Dendritic cell treated with granulocyte-macrophage colony-stimulating factor and Interleukin-4, amounts not matched to agents 40 ng/mL and 50 ng/mL, for 4 days (primary cell): ENCODE measurements at regions of chr10 and their contacts with region 1.

Region 1: GRCh38 chr10:122953827-122954730 is at the start of gene C10orf88:
- H3K4me3 Mint-ChIP-seq: peak within 1 kb of the TSS; percentile 95
- H3K27ac Mint-ChIP-seq: peak within 1 kb of the TSS; percentile 92
- H3K4me1 Mint-ChIP-seq: peaks cover 11% of the 10 kb centered on the region
- H3K27me3 Mint-ChIP-seq: peaks cover 22% of the 10 kb centered on the region

Region 2: GRCh38 chr10:122879339-122880273 is 74.5 kb before region 1 on chr10 and contains the start of gene FAM24B:
- intact Hi-C with region 1: loop called (anchors 5 kb)
- H3K4me3 Mint-ChIP-seq: peak within 1 kb of the TSS; percentile 85
- H3K27ac Mint-ChIP-seq: peak within 1 kb of the TSS; percentile 73
- H3K4me1 Mint-ChIP-seq: peaks cover 28% of the 10 kb centered on the region
- H3K27me3 Mint-ChIP-seq: peaks cover 20% of the 10 kb centered on the region

Region 3: GRCh38 chr10:122980209-122981065 is 26.4 kb after region 1 on chr10 and contains the start of gene PSTK:
- intact Hi-C with region 1: loop called (anchors 1 kb)
- H3K4me3 Mint-ChIP-seq: peak within 1 kb of the TSS; percentile 87
- H3K27ac Mint-ChIP-seq: peak within 1 kb of the TSS; percentile 96
- H3K4me1 Mint-ChIP-seq: peaks cover 6% of the 10 kb centered on the region
- H3K27me3 Mint-ChIP-seq: peaks cover 8% of the 10 kb centered on the region

Region 4: DNA sequence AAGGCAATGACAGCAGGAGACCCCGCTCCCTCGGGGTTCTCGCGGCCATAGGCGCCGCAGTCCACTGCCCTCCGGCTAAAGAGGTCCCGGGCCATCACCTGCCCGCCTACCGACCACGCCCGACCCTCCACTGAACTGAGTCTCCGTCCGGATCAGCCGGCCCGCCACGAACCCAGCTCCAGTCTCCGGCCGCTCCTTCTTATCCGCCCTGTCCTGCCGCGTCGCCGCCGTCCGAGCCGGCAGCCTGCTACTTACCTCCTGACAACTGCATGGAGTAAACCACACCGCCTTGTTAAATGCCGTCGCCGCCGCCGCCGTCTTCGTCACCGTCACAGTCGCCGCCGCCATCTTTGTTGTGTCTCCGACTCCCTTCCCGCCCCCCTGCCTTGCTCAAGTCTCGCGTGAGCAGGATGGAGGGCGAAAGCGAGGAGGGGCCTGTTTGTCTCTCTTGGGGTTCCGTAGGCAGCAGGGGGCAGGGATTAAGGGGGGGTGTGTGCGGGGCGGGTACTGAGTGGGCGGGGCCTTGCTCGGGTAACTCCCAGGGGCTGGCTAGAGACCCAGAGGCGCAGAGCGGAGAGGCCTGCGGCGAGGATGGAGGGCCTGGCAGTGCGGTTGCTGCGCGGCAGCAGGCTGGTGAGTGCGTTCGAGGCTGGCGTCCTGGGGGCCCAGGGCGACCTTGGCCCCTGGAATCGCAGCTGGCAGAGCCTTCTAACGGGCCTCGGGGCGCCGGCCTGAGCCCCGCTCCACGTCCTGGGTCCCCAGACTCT is 54.5 kb after region 1 on chr10 and contains the starts of genes ACADSB and IKZF5:
- intact Hi-C with region 1: loop called (anchors 1 kb)
- H3K4me3 Mint-ChIP-seq: peak within 1 kb of the TSS; percentile 100
- H3K27ac Mint-ChIP-seq: peak within 1 kb of the TSS; percentile 99
- H3K4me1 Mint-ChIP-seq: peaks cover 32% of the 10 kb centered on the region
- H3K27me3 Mint-ChIP-seq: peaks cover 3% of the 10 kb centered on the region